Activated CD8-positive, alpha-beta T cell treated with anti-CD3 and anti-CD28 coated beads for 36 hours (primary cell): ENCODE measurements at regions of chr16 and their contacts with region 1.

Region 1: GRCh38 chr16:65671-66137 is 6.7 kb downstream of the RHBDF1 start:
- DNase-seq: peak; percentile 93
- ATAC-seq: peak; percentile 97
- H3K4me3 Mint-ChIP-seq: no peak overlapping the region
- H3K27ac Mint-ChIP-seq: no peak overlapping the region
- H3K4me1 Mint-ChIP-seq: no peaks in the 10 kb centered on the region
- H3K27me3 Mint-ChIP-seq: peaks cover under 1% of the 10 kb centered on the region
- CTCF ChIP-seq: peak; percentile 94

Region 2: GRCh38 chr16:53346-54236 is 12.1 kb before region 1 on chr16 and contains the starts of genes POLR3K and SNRNP25:
- CTCF ChIA-PET with region 1: interaction called, 23 read pairs
- POLR2A ChIA-PET with region 1: interaction called, 5 read pairs
- intact Hi-C with region 1: no loop called
- DNase-seq: peak; percentile 99
- ATAC-seq: peak; percentile 98
- H3K4me3 Mint-ChIP-seq: peak within 1 kb of the TSS; percentile 97
- H3K27ac Mint-ChIP-seq: peak within 1 kb of the TSS; percentile 97
- H3K4me1 Mint-ChIP-seq: peaks cover 26% of the 10 kb centered on the region
- H3K27me3 Mint-ChIP-seq: no peaks in the 10 kb centered on the region
- CTCF ChIP-seq: no peak
- total RNA-seq, gene POLR3K: 51.3 to 52.6 TPM
- total RNA-seq, gene SNRNP25: 39.4 to 39.7 TPM

Region 3: GRCh38 chr16:84718-85406 is 19.2 kb after region 1 on chr16:
- CTCF ChIA-PET with region 1: interaction called, 458 read pairs
- POLR2A ChIA-PET with region 1: interaction called, 5 read pairs
- intact Hi-C with region 1: no loop called
- DNase-seq: peak; percentile 92
- ATAC-seq: peak; percentile 91
- H3K4me3 Mint-ChIP-seq: peak overlapping the region; percentile 14
- H3K27ac Mint-ChIP-seq: peak overlapping the region; percentile 92
- H3K4me1 Mint-ChIP-seq: peaks cover 36% of the 10 kb centered on the region
- H3K27me3 Mint-ChIP-seq: no peaks in the 10 kb centered on the region
- CTCF ChIP-seq: no peak

Region 4: GRCh38 chr16:106623-107324 is 41.1 kb after region 1 on chr16:
- CTCF ChIA-PET with region 1: interaction called, 35 read pairs
- POLR2A ChIA-PET with region 1: interaction called, 4 read pairs
- intact Hi-C with region 1: no loop called
- DNase-seq: peak; percentile 68
- ATAC-seq: peak; percentile 90
- H3K4me3 Mint-ChIP-seq: no peak overlapping the region
- H3K27ac Mint-ChIP-seq: no peak overlapping the region
- H3K4me1 Mint-ChIP-seq: peaks cover 3% of the 10 kb centered on the region
- H3K27me3 Mint-ChIP-seq: no peaks in the 10 kb centered on the region
- CTCF ChIP-seq: peak; percentile 68